ENCODE measurements at regions of chr16 and their contacts with region 1.

Region 1: DNA sequence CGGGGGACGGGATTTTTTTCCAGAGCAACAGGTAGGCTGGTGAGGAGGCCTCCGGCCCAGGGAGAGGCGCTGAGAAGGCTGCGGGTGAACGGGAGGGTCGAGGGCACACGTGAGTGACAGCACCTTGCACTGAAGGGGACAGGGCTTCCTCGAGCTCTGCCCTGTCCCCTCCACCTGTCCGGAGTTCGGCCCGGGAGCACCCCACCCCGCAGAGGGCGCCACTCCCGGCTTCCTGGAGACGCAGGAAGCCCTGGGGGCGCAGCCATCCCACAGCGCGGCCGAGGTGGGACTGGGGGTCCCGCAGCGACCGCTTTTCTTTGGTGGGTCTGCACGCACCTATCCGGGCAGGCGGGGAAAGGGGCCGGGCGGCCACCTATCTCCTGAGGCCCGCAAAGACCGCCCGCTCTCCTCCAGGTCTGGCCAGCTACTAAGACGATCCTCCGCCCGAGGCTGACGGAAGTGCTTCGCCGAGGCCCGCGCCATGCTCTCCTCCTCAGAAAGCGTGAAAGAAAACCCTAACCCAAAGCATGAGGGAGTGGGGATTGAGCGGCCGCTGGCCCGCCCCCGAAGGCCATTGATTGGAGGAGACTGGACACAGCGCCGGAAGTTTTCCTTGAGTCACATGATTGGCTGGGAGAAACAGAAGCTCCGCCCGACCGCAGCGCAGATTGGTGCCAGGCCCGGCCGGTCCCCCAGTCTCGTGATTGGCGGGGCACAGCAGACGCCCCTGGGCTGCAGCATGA is 34.3 kb downstream of the DDX19A start:
- DNase-seq: peak; percentile 98
- H3K4me3 Mint-ChIP-seq: peak overlapping the region; percentile 90
- H3K27ac Mint-ChIP-seq: peak overlapping the region; percentile 91
- H3K4me1 Mint-ChIP-seq: peaks cover 12% of the 10 kb centered on the region
- H3K27me3 Mint-ChIP-seq: no peaks in the 10 kb centered on the region

Region 2: DNA sequence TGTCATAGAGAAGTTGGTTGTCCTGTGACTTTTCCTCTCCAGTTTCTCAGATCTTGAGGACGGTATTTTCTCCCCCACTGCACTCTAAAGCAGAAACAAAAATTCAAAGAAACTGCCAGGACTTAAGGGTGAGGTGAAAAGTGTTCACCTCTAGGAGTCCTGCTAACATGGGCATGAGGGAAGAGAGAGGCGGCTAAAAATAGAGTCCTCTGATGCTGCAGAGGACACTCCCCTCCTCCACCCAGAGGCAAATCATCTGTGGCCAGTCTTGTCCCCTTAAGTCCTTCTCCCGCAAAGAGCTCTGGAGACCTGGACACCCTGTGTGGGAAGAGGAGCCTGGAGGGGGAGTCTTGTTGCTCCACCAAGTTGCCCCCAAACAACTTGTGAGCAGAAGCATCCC is 39.0 kb before region 1 on chr16:
- CTCF ChIA-PET with region 1: interaction called, 3 read pairs
- POLR2A ChIA-PET with region 1: interaction called, 12 read pairs
- intact Hi-C with region 1: loop called (anchors 2 kb)
- DNase-seq: no peak
- H3K4me3 Mint-ChIP-seq: no peak overlapping the region
- H3K27ac Mint-ChIP-seq: peak overlapping the region; percentile 11
- H3K4me1 Mint-ChIP-seq: peaks cover 7% of the 10 kb centered on the region
- H3K27me3 Mint-ChIP-seq: no peaks in the 10 kb centered on the region

Region 3: DNA sequence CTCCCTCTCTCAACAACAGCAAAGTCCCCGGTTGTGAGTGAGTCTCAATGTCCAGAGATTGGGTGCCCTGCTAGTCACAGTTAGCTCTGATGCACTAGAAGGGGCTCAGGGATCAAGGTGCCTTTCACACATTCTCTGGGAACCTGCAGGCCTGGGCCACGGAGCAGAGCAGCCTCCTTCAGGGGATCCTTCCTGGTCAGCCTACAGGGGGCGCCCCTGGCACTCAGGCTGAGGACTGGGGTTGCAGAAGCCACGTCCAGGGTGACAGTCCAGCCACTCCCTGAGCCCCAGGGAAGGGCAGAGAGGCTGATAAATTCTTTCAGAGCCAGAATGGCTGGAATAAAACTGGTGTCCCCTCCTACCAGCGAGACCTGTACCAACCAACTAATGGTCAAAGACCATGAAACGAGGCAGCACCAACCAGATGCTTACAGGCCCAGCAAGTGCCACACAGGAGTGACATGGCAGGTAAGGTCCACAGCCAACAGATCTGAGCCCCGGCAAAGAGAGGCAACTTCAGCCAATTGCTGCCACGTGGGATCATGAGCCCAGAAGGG is 14.4 kb after region 1 on chr16:
- CTCF ChIA-PET with region 1: interaction called, 10 read pairs
- POLR2A ChIA-PET with region 1: interaction called, 4 read pairs
- intact Hi-C with region 1: no loop called
- DNase-seq: peak; percentile 78
- H3K4me3 Mint-ChIP-seq: no peak overlapping the region
- H3K27ac Mint-ChIP-seq: no peak overlapping the region
- H3K4me1 Mint-ChIP-seq: no peaks in the 10 kb centered on the region
- H3K27me3 Mint-ChIP-seq: no peaks in the 10 kb centered on the region

Region 4: DNA sequence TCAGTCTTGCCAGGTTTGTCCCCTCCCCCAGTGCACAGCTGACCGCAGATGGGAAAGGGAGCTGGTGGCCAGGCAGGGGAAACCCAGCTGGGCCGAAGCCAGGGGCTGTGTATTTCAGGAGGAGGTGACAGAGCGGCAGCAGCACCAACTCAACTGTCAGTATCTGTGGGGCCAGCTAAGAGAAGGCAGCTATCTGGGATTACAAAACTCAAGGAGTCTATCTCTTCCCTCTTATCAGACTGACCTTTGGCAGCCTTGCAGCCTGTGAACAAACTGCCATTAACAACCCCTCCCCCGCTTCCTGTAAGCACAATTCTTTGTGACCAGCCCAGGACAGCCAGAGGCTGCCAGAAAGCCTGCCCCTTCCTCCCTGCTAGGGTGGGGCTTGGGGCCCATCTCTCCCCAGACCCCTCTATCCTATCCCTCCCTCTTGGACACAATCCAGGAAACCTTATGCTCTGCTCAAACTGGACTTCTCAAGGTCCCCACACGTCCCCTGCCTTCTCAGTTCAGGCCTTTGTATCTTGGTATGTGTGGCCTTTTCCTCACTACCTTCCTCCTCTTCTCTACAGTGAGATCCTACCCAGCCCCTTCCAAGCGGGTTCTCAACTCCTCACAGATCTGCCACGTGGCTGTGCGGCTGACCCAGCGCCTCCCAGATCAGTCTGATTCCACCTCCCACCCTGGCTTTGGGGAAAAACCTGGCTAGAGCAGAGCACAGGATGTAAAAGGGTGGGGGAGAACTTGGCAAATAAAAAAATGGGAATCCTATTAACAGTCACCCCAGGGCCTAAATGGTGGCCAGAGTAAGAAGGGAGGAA is 47.4 kb after region 1 on chr16:
- CTCF ChIA-PET with region 1: no interaction called
- POLR2A ChIA-PET with region 1: interaction called, 4 read pairs
- intact Hi-C with region 1: loop called (anchors 2 kb)
- DNase-seq: peak; percentile 88
- H3K4me3 Mint-ChIP-seq: peak overlapping the region; percentile 13
- H3K27ac Mint-ChIP-seq: peak overlapping the region; percentile 75
- H3K4me1 Mint-ChIP-seq: peaks cover 57% of the 10 kb centered on the region
- H3K27me3 Mint-ChIP-seq: no peaks in the 10 kb centered on the region

Region 5: GRCh38 chr16:70454222-70455034 is 73.4 kb after region 1 on chr16 and contains the start of gene FCSK:
- CTCF ChIA-PET with region 1: interaction called, 6 read pairs
- POLR2A ChIA-PET with region 1: interaction called, 11 read pairs
- intact Hi-C with region 1: loop called (anchors 1 kb)
- DNase-seq: peak; percentile 69
- H3K4me3 Mint-ChIP-seq: peak within 1 kb of the TSS; percentile 85
- H3K27ac Mint-ChIP-seq: peak within 1 kb of the TSS; percentile 67
- H3K4me1 Mint-ChIP-seq: peaks cover 12% of the 10 kb centered on the region
- H3K27me3 Mint-ChIP-seq: no peaks in the 10 kb centered on the region
- total RNA-seq, gene FCSK: 13.1 to 14.0 TPM

Region 6: GRCh38 chr16:70478912-70479341 is 97.9 kb after region 1 on chr16:
- CTCF ChIA-PET with region 1: interaction called, 3 read pairs
- POLR2A ChIA-PET with region 1: interaction called, 17 read pairs
- intact Hi-C with region 1: loop called (anchors 1 kb)
- DNase-seq: no peak
- H3K4me3 Mint-ChIP-seq: no peak overlapping the region
- H3K27ac Mint-ChIP-seq: peak overlapping the region; percentile 28
- H3K4me1 Mint-ChIP-seq: peaks cover 25% of the 10 kb centered on the region
- H3K27me3 Mint-ChIP-seq: no peaks in the 10 kb centered on the region

Region 7: DNA sequence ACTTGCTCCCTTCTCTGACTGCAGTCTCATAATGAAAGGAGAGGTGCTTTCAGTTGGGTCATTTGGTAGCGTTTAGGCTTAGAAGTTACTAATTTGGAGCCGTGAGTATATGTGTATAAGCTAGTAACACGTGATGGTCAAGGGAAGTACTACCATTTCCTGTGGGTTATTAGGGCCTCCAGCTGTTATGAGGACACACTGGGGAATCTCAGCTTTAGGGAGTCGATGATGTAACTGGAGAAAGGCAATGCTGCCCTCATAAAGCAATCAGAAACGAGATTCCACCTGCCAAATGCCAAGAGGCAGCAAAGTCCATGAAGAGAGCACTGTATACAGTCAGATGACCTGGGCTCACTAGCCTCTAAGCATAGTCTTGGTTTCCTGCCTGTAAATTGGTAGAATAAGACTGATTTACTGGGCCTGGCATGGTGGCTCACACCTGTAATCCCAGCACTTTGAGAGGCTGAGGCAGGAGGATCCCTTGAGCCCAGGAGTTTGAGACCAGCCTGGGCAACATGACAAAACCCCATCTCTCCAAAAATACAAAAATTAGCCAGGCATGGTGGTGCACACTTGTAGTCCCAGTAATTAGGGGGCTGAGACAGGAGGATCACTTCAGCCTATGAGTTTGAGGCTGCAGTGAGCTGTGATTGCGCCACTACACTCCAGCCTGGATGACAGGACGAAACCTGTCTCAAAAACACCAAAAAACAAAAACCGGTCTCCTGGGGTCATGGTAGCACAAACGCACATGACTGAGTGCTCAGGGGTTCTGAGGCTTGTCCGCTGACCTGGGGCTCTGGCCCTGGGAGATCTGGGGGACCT is 195.6 kb after region 1 on chr16:
- CTCF ChIA-PET with region 1: no interaction called
- POLR2A ChIA-PET with region 1: no interaction called
- intact Hi-C with region 1: loop called (anchors 5 kb)
- DNase-seq: no peak
- H3K4me3 Mint-ChIP-seq: no peak overlapping the region
- H3K27ac Mint-ChIP-seq: peak overlapping the region; percentile 59
- H3K4me1 Mint-ChIP-seq: peaks cover 26% of the 10 kb centered on the region
- H3K27me3 Mint-ChIP-seq: no peaks in the 10 kb centered on the region